OCI-LY7 (cell line): ENCODE measurements at regions of chr22 and their contacts with region 1.

Region 1: DNA sequence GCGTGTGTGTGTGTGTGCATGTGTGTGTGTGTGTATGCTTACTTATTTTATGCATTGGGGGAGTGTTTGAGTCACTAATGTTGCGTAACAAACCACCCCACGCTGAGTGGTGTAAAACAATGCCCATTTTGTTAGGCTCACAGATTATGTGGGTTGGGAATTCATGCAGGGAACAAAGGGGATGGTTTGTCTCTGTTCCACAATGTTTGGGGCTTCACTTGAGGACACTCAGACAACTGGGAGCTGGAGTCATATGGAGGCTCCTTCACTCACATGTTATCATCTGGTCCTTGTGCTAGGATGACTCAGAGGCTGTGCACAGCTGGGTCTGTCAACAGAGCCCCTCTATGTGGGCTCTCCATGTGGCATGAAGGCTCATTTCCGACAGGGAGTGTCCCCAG is 51.3 kb upstream of the LARGE1 start:
- DNase-seq: no peak
- H3K4me3 ChIP-seq: no peak overlapping the region
- H3K27ac ChIP-seq: no peak overlapping the region
- H3K4me1 ChIP-seq: no peaks in the 10 kb centered on the region
- CTCF ChIP-seq: no peak

Region 2: GRCh38 chr22:34017205-34017604 is 45.6 kb after region 1 on chr22:
- CTCF ChIA-PET with region 1: no interaction called
- POLR2A ChIA-PET with region 1: interaction called, 3 read pairs
- intact Hi-C with region 1: loop called (anchors 10 kb)
- DNase-seq: no peak
- H3K4me3 ChIP-seq: no peak overlapping the region
- H3K27ac ChIP-seq: no peak overlapping the region
- H3K4me1 ChIP-seq: no peaks in the 10 kb centered on the region
- CTCF ChIP-seq: no peak

Region 3: GRCh38 chr22:34115722-34116121 is 144.2 kb after region 1 on chr22:
- CTCF ChIA-PET with region 1: no interaction called
- POLR2A ChIA-PET with region 1: no interaction called
- intact Hi-C with region 1: no loop called
- DNase-seq: no peak
- H3K4me3 ChIP-seq: no peak overlapping the region
- H3K27ac ChIP-seq: no peak overlapping the region
- H3K4me1 ChIP-seq: no peaks in the 10 kb centered on the region
- CTCF ChIP-seq: no peak